ENCODE measurements at regions of chr2 and their contacts with region 1.

Region 1: GRCh38 chr2:19362755-19363473 is 4.5 kb upstream of the OSR1 start:
- DNase-seq: peak in 6 of 9 experiments; percentile 29 to 74 (median 52)
- ATAC-seq: peak; percentile 48
- H3K4me3 ChIP-seq: peak overlapping the region; percentile 67 to 70
- H3K4me3 Mint-ChIP-seq: peak overlapping the region; percentile 93
- H3K27ac ChIP-seq: no peak overlapping the region
- H3K27ac Mint-ChIP-seq: peak overlapping the region; percentile 68
- H3K4me1 ChIP-seq: peaks cover 36% of the 10 kb centered on the region
- H3K4me1 Mint-ChIP-seq: peaks cover 37% of the 10 kb centered on the region
- H3K27me3 ChIP-seq: peaks cover 28 to 33% of the 10 kb centered on the region in 2 experiments
- H3K27me3 Mint-ChIP-seq: peaks cover 33% of the 10 kb centered on the region
- CTCF ChIP-seq: peak; percentile 38

Region 2: GRCh38 chr2:17753803-17754663 is 1608.9 kb before region 1 on chr2 and contains the starts of genes GEN1 and SMC6:
- CTCF ChIA-PET with region 1: no interaction called
- POLR2A ChIA-PET with region 1: no interaction called
- intact Hi-C with region 1: loop called in 1 of 2 experiments (anchors 5 kb)
- DNase-seq: peak; percentile 79 to 95 (median 90)
- ATAC-seq: peak; percentile 82
- H3K4me3 ChIP-seq: peak within 1 kb of the TSS; percentile 82 to 87
- H3K4me3 Mint-ChIP-seq: peak within 1 kb of the TSS; percentile 92
- H3K27ac ChIP-seq: peak within 1 kb of the TSS; percentile 95 to 100
- H3K27ac Mint-ChIP-seq: peak within 1 kb of the TSS; percentile 97
- H3K4me1 ChIP-seq: peaks cover 17% of the 10 kb centered on the region
- H3K4me1 Mint-ChIP-seq: peaks cover 27% of the 10 kb centered on the region
- H3K27me3 ChIP-seq: no peaks in the 10 kb centered on the region
- H3K27me3 Mint-ChIP-seq: no peaks in the 10 kb centered on the region
- CTCF ChIP-seq: no peak
- total RNA-seq, gene GEN1: 6.3 to 7.3 TPM
- total RNA-seq, gene SMC6: 5.0 to 6.2 TPM

Region 3: GRCh38 chr2:18804536-18804935 is 558.4 kb before region 1 on chr2:
- CTCF ChIA-PET with region 1: no interaction called
- POLR2A ChIA-PET with region 1: no interaction called
- intact Hi-C with region 1: no loop called
- DNase-seq: no peak
- ATAC-seq: no peak
- H3K4me3 ChIP-seq: no peak overlapping the region
- H3K4me3 Mint-ChIP-seq: no peak overlapping the region
- H3K27ac ChIP-seq: no peak overlapping the region
- H3K27ac Mint-ChIP-seq: no peak overlapping the region
- H3K4me1 ChIP-seq: no peaks in the 10 kb centered on the region
- H3K4me1 Mint-ChIP-seq: no peaks in the 10 kb centered on the region
- H3K27me3 ChIP-seq: no peaks in the 10 kb centered on the region
- H3K27me3 Mint-ChIP-seq: no peaks in the 10 kb centered on the region
- CTCF ChIP-seq: no peak

Region 4: GRCh38 chr2:19235308-19235707 is 127.6 kb before region 1 on chr2:
- CTCF ChIA-PET with region 1: no interaction called
- POLR2A ChIA-PET with region 1: no interaction called
- intact Hi-C with region 1: no loop called
- DNase-seq: no peak
- ATAC-seq: no peak
- H3K4me3 ChIP-seq: no peak overlapping the region
- H3K4me3 Mint-ChIP-seq: no peak overlapping the region
- H3K27ac ChIP-seq: no peak overlapping the region
- H3K27ac Mint-ChIP-seq: no peak overlapping the region
- H3K4me1 ChIP-seq: no peaks in the 10 kb centered on the region
- H3K4me1 Mint-ChIP-seq: no peaks in the 10 kb centered on the region
- H3K27me3 ChIP-seq: no peaks in the 10 kb centered on the region
- H3K27me3 Mint-ChIP-seq: no peaks in the 10 kb centered on the region
- CTCF ChIP-seq: no peak

Region 5: DNA sequence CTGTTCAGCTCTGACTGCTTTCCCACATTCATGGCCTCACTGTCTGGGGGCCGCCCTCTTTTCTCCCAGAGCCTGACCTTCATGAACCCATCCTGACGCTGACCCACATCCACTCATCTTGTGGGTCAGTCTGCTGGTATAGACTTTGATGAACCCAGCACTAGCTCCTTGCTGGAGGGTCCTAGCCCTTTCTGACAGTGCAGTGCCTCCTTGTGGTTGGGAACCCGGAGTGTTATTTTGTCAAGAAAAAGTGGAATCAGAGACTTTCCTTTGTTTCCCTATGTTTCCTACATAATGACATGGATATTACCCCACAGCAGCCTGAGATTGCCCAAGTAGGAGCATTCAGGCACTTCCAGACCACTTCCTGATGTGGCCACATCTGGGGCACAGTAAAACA is 14.8 kb after region 1 on chr2:
- CTCF ChIA-PET with region 1: interaction called, 10 read pairs
- POLR2A ChIA-PET with region 1: no interaction called
- intact Hi-C with region 1: no loop called
- DNase-seq: peak in 2 of 9 experiments; percentile 12 to 28
- ATAC-seq: no peak
- H3K4me3 ChIP-seq: no peak overlapping the region
- H3K4me3 Mint-ChIP-seq: no peak overlapping the region
- H3K27ac ChIP-seq: no peak overlapping the region
- H3K27ac Mint-ChIP-seq: no peak overlapping the region
- H3K4me1 ChIP-seq: no peaks in the 10 kb centered on the region
- H3K4me1 Mint-ChIP-seq: no peaks in the 10 kb centered on the region
- H3K27me3 ChIP-seq: peaks cover 0 to 6% of the 10 kb centered on the region in 2 experiments
- H3K27me3 Mint-ChIP-seq: peaks cover 29% of the 10 kb centered on the region
- CTCF ChIP-seq: peak; percentile 23

Region 6: DNA sequence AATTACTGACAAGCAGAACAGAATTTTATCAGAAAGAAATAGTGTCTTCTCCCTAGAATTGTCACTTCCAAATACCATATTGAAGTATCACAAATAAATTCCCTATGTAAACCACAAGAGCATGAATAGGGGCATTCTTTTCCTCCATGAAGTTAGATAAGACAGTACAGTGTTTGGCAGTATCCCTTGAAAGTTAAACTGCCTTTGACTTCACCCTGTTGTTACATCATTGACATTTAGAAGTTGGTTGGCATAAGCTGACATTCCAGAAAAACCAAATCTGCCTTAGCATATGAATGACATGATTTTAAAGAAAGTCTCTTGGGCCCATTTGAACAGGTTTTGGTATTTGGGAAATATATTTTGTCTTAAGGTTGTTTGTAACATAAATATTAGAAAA is 45.7 kb after region 1 on chr2:
- CTCF ChIA-PET with region 1: no interaction called
- POLR2A ChIA-PET with region 1: no interaction called
- intact Hi-C with region 1: no loop called
- DNase-seq: no peak
- ATAC-seq: no peak
- H3K4me3 ChIP-seq: no peak overlapping the region
- H3K4me3 Mint-ChIP-seq: no peak overlapping the region
- H3K27ac ChIP-seq: no peak overlapping the region
- H3K27ac Mint-ChIP-seq: no peak overlapping the region
- H3K4me1 ChIP-seq: no peaks in the 10 kb centered on the region
- H3K4me1 Mint-ChIP-seq: no peaks in the 10 kb centered on the region
- H3K27me3 ChIP-seq: no peaks in the 10 kb centered on the region
- H3K27me3 Mint-ChIP-seq: peaks cover 17% of the 10 kb centered on the region
- CTCF ChIP-seq: no peak